ENCODE measurements at regions of chr10 and their contacts with region 1.

Region 1: DNA sequence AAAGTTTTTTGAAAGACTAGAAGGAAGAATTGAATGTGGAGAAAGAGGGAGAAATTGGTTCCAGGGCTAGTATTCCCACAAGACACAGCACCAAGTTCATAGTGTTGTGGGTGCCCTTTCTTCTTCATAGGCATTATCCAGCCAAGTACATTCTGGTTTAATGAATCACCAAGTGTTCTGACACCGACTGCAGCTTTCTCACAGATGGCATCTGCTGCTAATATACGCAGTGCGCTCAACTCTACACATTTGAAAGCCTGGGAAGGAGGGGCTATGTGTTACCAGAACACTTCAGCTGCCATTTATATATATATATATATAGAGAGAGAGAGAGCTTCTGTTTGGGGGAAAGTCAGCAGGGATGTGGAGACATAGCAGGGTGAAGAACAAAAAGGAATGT is 1168.4 kb downstream of the GATA3 start:
- DNase-seq: no peak
- H3K4me3 ChIP-seq: no peak overlapping the region
- H3K27ac ChIP-seq: no peak overlapping the region
- H3K4me1 ChIP-seq: no peaks in the 10 kb centered on the region
- H3K27me3 ChIP-seq: no peaks in the 10 kb centered on the region
- CTCF ChIP-seq: no peak

Region 2: GRCh38 chr10:7969623-7970022 is 1253.3 kb before region 1 on chr10:
- CTCF ChIA-PET with region 1: no interaction called
- POLR2A ChIA-PET with region 1: interaction called, 10 read pairs
- intact Hi-C with region 1: no loop called
- DNase-seq: peak in 1 of 2 experiments; percentile 17
- H3K4me3 ChIP-seq: no peak overlapping the region
- H3K27ac ChIP-seq: no peak overlapping the region
- H3K4me1 ChIP-seq: no peaks in the 10 kb centered on the region
- H3K27me3 ChIP-seq: no peaks in the 10 kb centered on the region
- CTCF ChIP-seq: no peak

Region 3: GRCh38 chr10:9253108-9253507 is 30.2 kb after region 1 on chr10:
- CTCF ChIA-PET with region 1: no interaction called
- POLR2A ChIA-PET with region 1: no interaction called
- intact Hi-C with region 1: no loop called
- DNase-seq: no peak
- H3K4me3 ChIP-seq: no peak overlapping the region
- H3K27ac ChIP-seq: no peak overlapping the region
- H3K4me1 ChIP-seq: no peaks in the 10 kb centered on the region; the same call in 1 of the 2 replicates
- H3K27me3 ChIP-seq: no peaks in the 10 kb centered on the region
- CTCF ChIP-seq: no peak